T-cell (primary cell): ENCODE measurements at regions of chr5 and their contacts with region 1.

Region 1: DNA sequence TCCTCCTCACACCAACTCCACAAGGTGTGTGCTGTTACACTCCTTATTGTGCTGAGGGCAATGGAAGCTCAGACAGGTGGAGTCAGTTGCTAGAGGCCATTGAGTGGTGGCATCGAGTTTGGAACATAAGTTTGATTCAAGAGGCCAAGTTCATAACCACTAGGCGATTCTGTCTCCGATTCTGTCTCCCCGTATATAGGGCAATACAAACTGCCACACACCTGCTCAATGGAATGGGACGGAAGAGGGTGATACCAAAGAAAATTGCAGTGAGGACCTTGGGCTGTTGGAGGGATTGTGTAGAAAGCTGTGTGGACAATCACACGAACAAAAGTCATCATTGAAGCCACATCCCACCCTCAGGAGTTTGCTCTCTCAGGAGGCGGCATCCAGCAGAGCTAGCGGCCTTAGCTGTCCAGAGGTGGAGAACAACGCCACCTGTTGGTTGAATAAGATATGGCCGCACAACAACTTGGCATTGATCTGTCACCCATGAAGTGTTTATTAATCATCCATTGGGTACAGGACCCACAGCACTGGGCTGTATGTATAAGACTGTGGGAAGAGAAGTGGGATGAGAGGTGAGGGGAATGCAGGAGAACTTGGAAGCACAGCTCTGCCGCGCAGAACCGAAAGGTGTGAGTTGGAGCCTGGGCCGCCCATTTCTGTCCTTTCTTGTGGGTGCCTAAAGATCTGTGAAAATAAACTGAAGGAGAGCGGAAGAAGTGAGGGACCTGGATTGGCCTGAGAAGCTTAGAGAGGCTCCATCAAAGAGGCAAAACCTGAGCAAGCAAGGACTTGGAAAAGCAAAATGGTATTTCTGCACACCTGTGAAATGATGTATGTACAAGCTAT is 16.1 kb upstream of the NEUROG1 start:
- DNase-seq: peak in 30 of 35 experiments; percentile 5 to 66 (median 29)
- ATAC-seq: peak in 3 of 4 experiments; percentile 17 to 56 (median 32)
- H3K4me3 ChIP-seq: no peak overlapping the region
- H3K4me3 Mint-ChIP-seq: no peak overlapping the region
- H3K27ac ChIP-seq: no peak overlapping the region
- H3K27ac Mint-ChIP-seq: no peak overlapping the region
- H3K4me1 ChIP-seq: no peaks in the 10 kb centered on the region
- H3K4me1 Mint-ChIP-seq: no peaks in the 10 kb centered on the region
- H3K27me3 ChIP-seq: peaks cover 3 to 61% of the 10 kb centered on the region in 2 experiments
- H3K27me3 Mint-ChIP-seq: peaks cover 53 to 58% of the 10 kb centered on the region in 2 donors

Region 2: DNA sequence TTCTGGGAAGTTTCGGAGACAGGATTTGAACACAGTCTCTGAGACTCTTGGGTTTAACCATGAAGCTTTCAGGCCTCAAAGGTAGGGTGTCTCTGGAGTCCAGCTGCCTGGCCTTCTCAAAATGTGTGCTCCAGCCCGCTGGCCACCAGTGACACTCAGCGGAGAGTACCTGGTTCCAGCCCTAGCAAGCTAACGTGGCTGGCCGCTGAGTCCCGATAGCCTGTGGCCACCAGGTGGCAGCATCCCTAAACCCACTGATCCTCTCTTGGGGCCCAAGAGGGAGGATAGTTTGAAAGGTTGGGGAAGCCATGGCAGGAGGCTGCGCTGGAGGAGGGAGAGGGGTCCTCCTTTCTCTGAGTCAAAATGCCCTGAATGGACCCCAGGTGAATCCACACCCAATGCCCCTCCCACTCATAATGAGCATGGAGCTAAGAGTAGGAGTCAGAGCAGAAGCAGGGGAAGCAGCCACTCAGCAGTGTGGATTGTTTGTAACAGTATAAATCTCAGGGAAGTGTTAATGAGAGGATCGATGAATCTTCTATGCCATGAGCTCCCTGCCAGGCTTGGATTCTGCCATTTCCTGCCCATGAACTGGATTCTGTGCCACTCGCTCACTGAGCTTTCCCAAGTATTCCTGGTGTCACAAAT is 94.3 kb before region 1 on chr5:
- CTCF ChIA-PET with region 1: interaction called, 4 to 12 read pairs
- POLR2A ChIA-PET with region 1: no interaction called
- DNase-seq: peak in 33 of 35 experiments; percentile 12 to 63 (median 37)
- ATAC-seq: peak; percentile 53 to 67 (median 62)
- H3K4me3 ChIP-seq: no peak overlapping the region
- H3K4me3 Mint-ChIP-seq: no peak overlapping the region
- H3K27ac ChIP-seq: no peak overlapping the region
- H3K27ac Mint-ChIP-seq: no peak overlapping the region
- H3K4me1 ChIP-seq: no peaks in the 10 kb centered on the region
- H3K4me1 Mint-ChIP-seq: peaks cover 0 to 5% (median 0%) of the 10 kb centered on the region in 3 donors
- H3K27me3 ChIP-seq: peaks cover 0 to 46% of the 10 kb centered on the region in 2 experiments
- H3K27me3 Mint-ChIP-seq: peaks cover 9 to 19% of the 10 kb centered on the region in 2 donors

Region 3: DNA sequence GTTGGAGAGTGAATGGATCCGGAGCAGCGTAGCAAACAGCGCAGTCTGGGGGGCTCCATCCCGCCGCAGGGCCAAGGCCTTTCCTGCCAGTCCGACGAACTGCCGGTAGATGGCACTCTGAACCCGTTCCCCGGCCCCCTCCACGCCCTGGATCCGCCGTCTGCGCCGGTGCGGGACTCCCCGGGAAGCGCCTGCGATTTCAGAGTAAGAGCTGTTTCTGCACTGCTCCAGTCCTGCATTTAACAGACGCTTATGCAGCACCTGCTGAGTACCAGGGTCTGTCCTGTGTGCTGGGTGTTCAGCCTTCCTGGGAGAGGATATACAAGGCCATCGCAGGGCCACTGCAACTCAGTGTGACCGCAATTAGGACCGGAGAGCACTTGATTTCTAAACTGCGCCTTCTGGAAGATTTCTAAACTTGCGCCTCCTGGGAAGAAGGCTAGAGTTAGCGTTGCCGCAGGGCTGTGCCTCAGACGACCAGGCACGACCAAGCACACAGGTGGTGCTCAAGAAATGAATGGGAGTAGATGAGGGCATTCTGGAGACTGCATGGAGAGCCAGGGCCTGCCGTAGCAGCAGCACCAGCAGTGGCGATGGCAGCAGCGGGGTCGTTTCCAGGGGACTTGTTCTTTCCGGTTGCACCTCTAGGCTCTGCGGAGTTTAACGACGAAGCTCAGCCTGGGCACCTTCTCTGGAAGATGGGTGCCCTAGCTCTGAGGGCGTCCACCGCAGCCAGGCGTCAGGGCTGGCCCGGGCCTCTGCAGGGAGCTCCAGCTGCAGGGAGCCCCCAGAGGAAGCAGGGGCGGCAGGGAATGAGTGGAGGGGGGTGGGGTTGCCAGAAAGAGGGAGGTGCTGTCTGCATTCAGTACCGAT is 85.4 kb before region 1 on chr5:
- CTCF ChIA-PET with region 1: interaction called, 5 to 10 read pairs
- POLR2A ChIA-PET with region 1: interaction called in 1 of 2 experiments, 4 read pairs
- DNase-seq: peak; percentile 15 to 69 (median 52)
- ATAC-seq: peak; percentile 73 to 85 (median 80)
- H3K4me3 ChIP-seq: peak overlapping the region in 1 of 2 donors; percentile 39
- H3K4me3 Mint-ChIP-seq: peak overlapping the region; percentile 39 to 75 (median 57)
- H3K27ac ChIP-seq: no peak overlapping the region
- H3K27ac Mint-ChIP-seq: peak overlapping the region in 1 of 2 donors; percentile 3
- H3K4me1 ChIP-seq: peaks cover 0 to 10% of the 10 kb centered on the region in 2 experiments
- H3K4me1 Mint-ChIP-seq: peaks cover 6 to 13% (median 7%) of the 10 kb centered on the region in 3 donors
- H3K27me3 ChIP-seq: peaks cover 5 to 54% of the 10 kb centered on the region in 2 experiments
- H3K27me3 Mint-ChIP-seq: peaks cover 36 to 39% of the 10 kb centered on the region in 2 donors

Region 4: GRCh38 chr5:135565725-135566421 is 14.1 kb after region 1 on chr5:
- CTCF ChIA-PET with region 1: interaction called, 9 to 12 read pairs
- POLR2A ChIA-PET with region 1: interaction called in 1 of 2 experiments, 7 read pairs
- DNase-seq: peak in 33 of 35 experiments; percentile 12 to 70 (median 51)
- ATAC-seq: peak; percentile 44 to 71 (median 56)
- H3K4me3 ChIP-seq: no peak overlapping the region
- H3K4me3 Mint-ChIP-seq: no peak overlapping the region
- H3K27ac ChIP-seq: no peak overlapping the region
- H3K27ac Mint-ChIP-seq: no peak overlapping the region
- H3K4me1 ChIP-seq: peaks cover 0 to 7% of the 10 kb centered on the region in 2 experiments
- H3K4me1 Mint-ChIP-seq: peaks cover 2 to 10% (median 6%) of the 10 kb centered on the region in 3 donors
- H3K27me3 ChIP-seq: peaks cover 0 to 34% of the 10 kb centered on the region in 2 experiments
- H3K27me3 Mint-ChIP-seq: peaks cover 0 to 7% of the 10 kb centered on the region in 2 donors

Region 5: GRCh38 chr5:135600971-135601381 is 49.2 kb after region 1 on chr5:
- CTCF ChIA-PET with region 1: no interaction called
- POLR2A ChIA-PET with region 1: no interaction called
- DNase-seq: no peak
- ATAC-seq: no peak
- H3K4me3 ChIP-seq: no peak overlapping the region
- H3K4me3 Mint-ChIP-seq: no peak overlapping the region
- H3K27ac ChIP-seq: no peak overlapping the region
- H3K27ac Mint-ChIP-seq: no peak overlapping the region
- H3K4me1 ChIP-seq: no peaks in the 10 kb centered on the region
- H3K4me1 Mint-ChIP-seq: no peaks in the 10 kb centered on the region
- H3K27me3 ChIP-seq: peaks cover 0 to 13% of the 10 kb centered on the region in 2 experiments
- H3K27me3 Mint-ChIP-seq: peaks cover 6 to 13% of the 10 kb centered on the region in 2 donors

Region 6: DNA sequence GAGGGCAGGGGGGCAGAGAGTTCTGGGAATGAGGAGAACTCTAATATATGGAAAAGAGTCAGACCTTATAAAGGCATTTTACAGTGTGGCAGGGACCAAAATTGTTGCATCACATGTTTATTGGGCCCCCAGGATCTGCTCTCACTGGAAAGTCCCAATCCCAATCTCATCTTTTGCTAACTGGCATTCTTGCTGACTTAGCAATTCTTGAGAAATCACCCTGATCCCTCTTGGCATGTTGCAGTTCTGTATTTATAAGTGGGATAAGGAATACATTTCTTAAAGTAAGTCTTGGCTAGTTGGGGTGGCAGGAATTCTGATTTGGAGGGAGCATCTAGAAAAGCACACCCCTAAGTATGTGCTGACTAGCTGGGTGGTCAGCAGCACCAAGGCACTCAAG is 131.4 kb after region 1 on chr5:
- CTCF ChIA-PET with region 1: interaction called in 1 of 2 experiments, 10 read pairs
- POLR2A ChIA-PET with region 1: no interaction called
- DNase-seq: no peak
- ATAC-seq: no peak
- H3K4me3 ChIP-seq: no peak overlapping the region
- H3K4me3 Mint-ChIP-seq: no peak overlapping the region
- H3K27ac ChIP-seq: no peak overlapping the region
- H3K27ac Mint-ChIP-seq: no peak overlapping the region
- H3K4me1 ChIP-seq: no peaks in the 10 kb centered on the region
- H3K4me1 Mint-ChIP-seq: no peaks in the 10 kb centered on the region
- H3K27me3 ChIP-seq: peaks cover 0 to 25% of the 10 kb centered on the region in 2 experiments
- H3K27me3 Mint-ChIP-seq: peaks cover 6 to 8% of the 10 kb centered on the region in 2 donors